ENCODE measurements at regions of chr12 and their contacts with region 1.

Region 1: GRCh38 chr12:6867413-6868210 is at the start of gene TPI1:
- DNase-seq: peak; percentile 88 to 95 (median 94)
- ATAC-seq: peak; percentile 84 to 86
- H3K4me3 ChIP-seq: peak within 1 kb of the TSS; percentile 60
- H3K27ac ChIP-seq: peak within 1 kb of the TSS; percentile 94
- H3K4me1 ChIP-seq: peaks cover 2% of the 10 kb centered on the region
- H3K27me3 ChIP-seq: no peaks in the 10 kb centered on the region
- total RNA-seq, gene TPI1: 707 to 793 (median 721) TPM

Region 2: DNA sequence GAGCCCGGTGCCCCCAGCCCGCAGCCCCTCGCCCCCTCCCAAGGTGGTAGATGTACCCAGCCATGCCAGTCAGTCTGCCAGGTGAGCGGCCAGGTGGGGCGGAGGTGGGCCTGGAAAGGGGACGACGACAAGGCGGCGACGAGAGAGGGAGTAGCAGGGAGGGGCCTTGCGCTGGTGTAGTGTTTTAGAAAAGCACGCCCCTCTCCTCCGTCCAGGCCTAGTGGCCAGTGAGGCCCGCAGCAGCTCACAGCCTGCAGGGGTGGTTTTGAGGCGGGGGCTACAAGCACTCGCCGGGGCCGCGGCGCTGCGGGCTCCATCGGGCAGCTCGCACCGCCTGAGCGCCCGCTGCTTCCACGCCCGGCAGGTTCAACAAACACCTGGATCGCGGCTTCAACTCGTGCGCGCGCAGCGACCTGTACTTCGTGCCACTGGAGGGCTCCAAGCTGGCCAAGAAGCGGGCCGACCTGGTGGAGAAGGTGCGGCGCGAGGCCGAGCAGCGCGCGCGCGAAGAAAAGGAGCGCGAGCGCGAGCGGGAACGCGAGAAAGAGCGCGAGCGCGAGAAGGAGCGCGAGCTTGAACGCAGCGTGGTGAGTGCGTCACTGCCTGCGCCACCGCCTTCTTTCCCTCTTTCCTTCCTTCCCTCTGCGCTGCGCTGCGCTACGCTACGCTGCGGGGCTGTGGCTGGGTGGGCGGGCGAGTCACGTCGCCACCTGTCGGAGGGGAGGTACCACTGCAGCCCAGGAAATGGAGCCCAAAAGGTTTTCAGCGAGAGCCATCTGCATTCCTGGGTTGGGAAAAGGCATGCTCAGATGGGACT is 70.1 kb after region 1 on chr12:
- intact Hi-C with region 1: loop called in 1 of 4 experiments (anchors 2 kb)
- DNase-seq: peak; percentile 95 to 97 (median 97)
- ATAC-seq: peak; percentile 86 to 90
- H3K4me3 ChIP-seq: peak overlapping the region; percentile 32
- H3K27ac ChIP-seq: peak overlapping the region; percentile 77
- H3K4me1 ChIP-seq: peaks cover 5% of the 10 kb centered on the region
- H3K27me3 ChIP-seq: no peaks in the 10 kb centered on the region

Measured in right cardiac atrium (tissue), 5 donors.